Activated CD8-positive, alpha-beta memory T cell treated with anti-CD3 and anti-CD28 coated beads, Interleukin-2, amount 10 ng/mL, durations not matched to agents 7 days and 5 days (primary cell): ENCODE measurements at regions of chr19 and their contacts with region 1.

Region 1: DNA sequence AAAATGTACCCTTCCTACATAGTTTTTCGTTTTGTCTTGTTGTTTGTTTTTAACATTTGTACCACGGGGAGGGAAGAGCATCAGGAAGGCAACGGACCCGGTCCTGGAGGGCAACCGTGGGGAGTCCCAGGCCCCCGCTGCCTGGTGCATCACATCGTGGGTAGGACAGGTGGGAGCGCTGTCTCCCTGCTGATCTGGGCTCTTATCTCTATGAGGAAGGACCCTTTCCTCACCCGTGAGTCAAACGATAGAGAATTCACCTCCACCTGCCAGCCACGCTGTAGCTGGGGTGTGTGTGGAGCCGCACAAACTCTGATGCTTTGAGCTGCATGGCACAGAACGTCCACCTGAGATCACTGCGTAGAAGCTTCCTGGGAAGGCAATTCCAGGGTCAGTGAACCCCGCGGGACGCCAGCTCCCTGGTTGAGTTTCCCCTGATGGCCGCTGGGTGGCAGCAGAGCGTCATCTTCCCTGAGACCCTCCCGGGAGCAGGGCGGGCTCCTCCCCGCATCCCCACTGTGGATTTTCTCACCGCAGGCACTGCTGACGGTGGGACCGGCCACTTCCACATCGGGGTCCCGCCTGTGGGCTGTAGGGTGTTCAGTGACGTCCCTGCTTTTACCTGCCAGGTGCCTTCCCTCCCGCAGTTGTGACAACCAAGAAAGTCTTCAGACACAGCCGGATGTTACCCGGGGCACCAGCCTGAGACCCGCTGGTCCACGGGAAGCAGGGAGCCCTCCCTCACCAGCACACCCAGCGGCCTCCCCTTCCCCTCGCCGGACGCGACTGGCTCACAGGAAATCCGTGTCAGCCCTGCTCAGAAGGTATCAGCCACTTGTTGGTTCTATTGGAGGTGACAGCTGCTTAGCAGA is 54.7 kb downstream of the ZNF787 start:
- DNase-seq: peak; percentile 70
- ATAC-seq: peak; percentile 81
- H3K4me3 Mint-ChIP-seq: peak overlapping the region; percentile 41
- H3K27ac Mint-ChIP-seq: no peak overlapping the region
- H3K4me1 Mint-ChIP-seq: peaks cover 16% of the 10 kb centered on the region
- H3K27me3 Mint-ChIP-seq: peaks cover 16% of the 10 kb centered on the region

Region 2: DNA sequence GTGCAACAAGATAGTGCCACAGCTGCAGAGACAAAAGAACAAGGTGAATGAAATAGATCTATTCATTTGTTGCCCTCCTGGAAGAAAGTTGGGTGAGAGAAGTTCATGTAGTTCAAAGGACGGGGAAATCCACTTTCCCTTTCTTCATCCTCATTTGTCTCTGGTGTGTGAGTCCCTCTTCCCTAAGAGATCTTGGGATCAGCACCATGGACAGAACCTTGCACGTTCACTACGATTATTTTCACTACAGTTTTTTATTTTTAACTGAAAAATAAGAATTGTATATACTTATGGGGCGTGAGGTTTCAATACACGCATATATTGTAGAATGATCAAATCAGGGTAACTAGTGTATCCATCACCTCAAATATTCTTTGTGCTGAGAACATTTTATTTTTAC is 50.6 kb before region 1 on chr19:
- CTCF ChIA-PET with region 1: no interaction called
- DNase-seq: no peak
- ATAC-seq: no peak
- H3K4me3 Mint-ChIP-seq: no peak overlapping the region
- H3K27ac Mint-ChIP-seq: no peak overlapping the region
- H3K4me1 Mint-ChIP-seq: no peaks in the 10 kb centered on the region
- H3K27me3 Mint-ChIP-seq: no peaks in the 10 kb centered on the region

Region 3: DNA sequence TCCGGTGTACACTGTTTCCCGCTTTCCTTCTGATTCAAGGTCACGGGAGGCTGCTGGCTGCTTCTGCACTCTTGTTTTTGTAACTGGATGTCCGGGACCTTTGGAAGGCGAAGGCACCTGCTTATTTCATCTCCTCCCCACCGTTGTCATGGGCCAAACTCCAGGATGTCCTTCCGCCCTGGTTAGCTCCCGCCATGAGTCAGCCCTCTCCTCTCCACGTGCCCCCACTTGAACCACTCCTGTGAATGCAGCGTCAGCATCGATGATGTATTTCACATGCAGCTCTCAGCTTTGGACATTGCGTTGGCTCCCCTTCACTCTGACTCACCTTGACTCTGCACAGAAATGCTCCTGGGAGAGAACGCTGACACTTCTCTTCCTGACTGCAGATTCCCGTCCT is 103.9 kb after region 1 on chr19:
- CTCF ChIA-PET with region 1: interaction called, 18 read pairs
- DNase-seq: no peak
- ATAC-seq: no peak
- H3K4me3 Mint-ChIP-seq: no peak overlapping the region
- H3K27ac Mint-ChIP-seq: no peak overlapping the region
- H3K4me1 Mint-ChIP-seq: peaks cover 4% of the 10 kb centered on the region
- H3K27me3 Mint-ChIP-seq: peaks cover 2% of the 10 kb centered on the region